HCT116 (cell line): ENCODE measurements at regions of chr9 and their contacts with region 1.

Region 1: DNA sequence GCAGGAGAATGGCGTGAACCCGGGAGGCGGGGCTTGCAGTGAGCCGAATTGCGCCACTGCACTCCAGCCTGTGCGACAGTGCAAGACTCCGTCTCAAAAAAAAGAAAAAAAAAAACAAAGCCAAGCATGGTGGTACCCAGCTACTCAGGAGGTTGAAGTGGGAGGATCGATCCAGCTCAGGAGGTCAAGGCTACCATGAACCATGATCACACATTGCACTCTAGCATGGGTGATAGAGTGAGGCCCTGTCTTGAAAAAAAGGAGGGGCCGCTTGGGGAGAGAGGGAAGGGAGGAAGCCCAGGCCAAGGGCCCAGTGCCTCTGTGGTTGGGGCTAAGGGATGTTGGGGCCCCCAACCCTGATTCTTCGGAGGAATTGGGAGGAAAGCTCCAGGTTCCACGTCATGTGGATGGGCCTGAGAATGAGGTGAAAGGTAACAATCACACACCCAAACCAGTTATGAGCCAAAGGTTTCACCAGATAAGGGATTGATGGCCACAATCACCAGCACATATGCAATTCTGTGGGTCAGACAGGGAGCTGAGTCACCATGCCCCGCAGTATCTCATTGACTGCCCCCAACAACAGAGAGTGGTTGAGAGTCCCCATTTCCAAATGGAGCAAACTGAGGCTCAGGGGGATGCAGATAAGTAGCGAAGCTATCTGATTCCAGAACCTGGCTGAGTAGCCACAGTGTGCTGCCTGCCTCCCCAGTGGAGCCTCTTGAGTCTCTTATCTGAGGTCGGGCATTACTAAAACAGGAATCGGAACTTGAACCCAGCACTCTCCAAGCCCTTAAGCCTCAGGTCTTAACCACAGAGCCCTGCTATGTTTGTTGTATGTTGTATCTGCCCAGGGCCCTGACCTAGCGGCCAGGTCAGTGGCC is 20.5 kb downstream of the SWI5 start:
- DNase-seq: no peak
- ATAC-seq: no peak
- H3K4me3 ChIP-seq: no peak overlapping the region
- H3K27ac ChIP-seq: no peak overlapping the region
- H3K4me1 ChIP-seq: peaks cover 5 to 29% of the 10 kb centered on the region in 2 experiments; a peak in 3 of 4 replicates
- H3K27me3 ChIP-seq: no peaks in the 10 kb centered on the region
- CTCF ChIP-seq: no peak
- POLR2A ChIP-seq: no peak
- RAD21 ChIP-seq: no peak

Region 2: GRCh38 chr9:128127990-128128835 is 168.4 kb before region 1 on chr9:
- CTCF ChIA-PET with region 1: no interaction called
- POLR2A ChIA-PET with region 1: no interaction called
- RAD21 ChIA-PET with region 1: no interaction called
- intact Hi-C with region 1: no loop called
- DNase-seq: peak; percentile 90
- ATAC-seq: peak; percentile 78
- H3K4me3 ChIP-seq: peak overlapping the region; percentile 90 to 92
- H3K27ac ChIP-seq: peak overlapping the region; percentile 99
- H3K4me1 ChIP-seq: peaks cover 9 to 31% of the 10 kb centered on the region in 2 experiments
- H3K27me3 ChIP-seq: no peaks in the 10 kb centered on the region
- CTCF ChIP-seq: no peak
- POLR2A ChIP-seq: no peak
- RAD21 ChIP-seq: no peak

Region 3: DNA sequence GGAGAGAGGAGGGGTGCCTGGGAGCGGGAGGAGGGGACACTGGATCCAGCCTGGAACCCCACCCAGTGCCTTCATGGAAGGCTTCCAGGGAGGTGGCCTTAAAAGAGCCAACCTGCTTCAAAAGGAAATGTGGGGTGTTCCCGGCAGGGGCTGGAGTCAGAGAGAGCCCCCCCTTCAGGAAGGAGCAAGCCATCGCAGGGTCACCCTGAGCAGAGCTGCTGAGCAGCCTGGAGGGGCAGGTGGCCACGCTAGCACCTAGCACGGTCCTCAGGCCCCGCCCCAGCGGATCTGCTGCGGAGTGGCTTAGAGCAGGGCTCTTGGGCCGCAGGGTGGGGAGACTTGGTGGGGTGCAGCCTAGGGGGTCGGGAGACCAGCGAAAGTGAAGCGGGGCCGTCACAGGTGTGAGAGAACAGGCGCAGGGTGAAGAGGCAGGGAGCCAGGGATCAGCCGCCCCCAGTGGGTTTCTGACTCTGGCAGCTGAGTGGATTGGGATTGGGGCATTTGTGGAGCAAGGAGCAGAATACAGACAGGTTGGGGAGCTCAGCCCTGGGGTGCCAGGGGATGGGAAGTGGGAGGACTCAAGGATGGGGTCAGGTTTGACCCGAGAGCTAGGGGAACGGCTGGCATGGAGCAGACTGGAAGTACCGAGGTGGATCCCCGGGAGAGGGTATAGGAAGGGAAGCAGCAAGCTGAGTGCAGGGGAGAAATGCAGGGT is 145.8 kb before region 1 on chr9:
- CTCF ChIA-PET with region 1: no interaction called
- POLR2A ChIA-PET with region 1: no interaction called
- RAD21 ChIA-PET with region 1: no interaction called
- intact Hi-C with region 1: no loop called
- DNase-seq: peak; percentile 10
- ATAC-seq: peak; percentile 89
- H3K4me3 ChIP-seq: no peak overlapping the region
- H3K27ac ChIP-seq: no peak overlapping the region
- H3K4me1 ChIP-seq: peaks cover 10 to 29% of the 10 kb centered on the region in 2 experiments
- H3K27me3 ChIP-seq: no peaks in the 10 kb centered on the region
- CTCF ChIP-seq: peak in 2 of 3 experiments; percentile 66 to 70; a peak in 4 of 6 replicates
- POLR2A ChIP-seq: no peak
- RAD21 ChIP-seq: no peak

Region 4: GRCh38 chr9:128361986-128362646 is 65.5 kb after region 1 on chr9:
- CTCF ChIA-PET with region 1: interaction called, 26 read pairs
- POLR2A ChIA-PET with region 1: no interaction called
- RAD21 ChIA-PET with region 1: interaction called in 1 of 2 experiments, 4 read pairs
- intact Hi-C with region 1: loop called (anchors 1 kb)
- DNase-seq: peak; percentile 59
- ATAC-seq: peak; percentile 92
- H3K4me3 ChIP-seq: peak overlapping the region; percentile 25 to 33
- H3K27ac ChIP-seq: peak overlapping the region; percentile 29
- H3K4me1 ChIP-seq: peaks cover 7 to 28% of the 10 kb centered on the region in 2 experiments; a peak in 3 of 4 replicates
- H3K27me3 ChIP-seq: no peaks in the 10 kb centered on the region
- CTCF ChIP-seq: peak in 2 of 3 experiments; percentile 85 to 88; a peak in 4 of 6 replicates
- POLR2A ChIP-seq: no peak
- RAD21 ChIP-seq: no peak

Region 5: DNA sequence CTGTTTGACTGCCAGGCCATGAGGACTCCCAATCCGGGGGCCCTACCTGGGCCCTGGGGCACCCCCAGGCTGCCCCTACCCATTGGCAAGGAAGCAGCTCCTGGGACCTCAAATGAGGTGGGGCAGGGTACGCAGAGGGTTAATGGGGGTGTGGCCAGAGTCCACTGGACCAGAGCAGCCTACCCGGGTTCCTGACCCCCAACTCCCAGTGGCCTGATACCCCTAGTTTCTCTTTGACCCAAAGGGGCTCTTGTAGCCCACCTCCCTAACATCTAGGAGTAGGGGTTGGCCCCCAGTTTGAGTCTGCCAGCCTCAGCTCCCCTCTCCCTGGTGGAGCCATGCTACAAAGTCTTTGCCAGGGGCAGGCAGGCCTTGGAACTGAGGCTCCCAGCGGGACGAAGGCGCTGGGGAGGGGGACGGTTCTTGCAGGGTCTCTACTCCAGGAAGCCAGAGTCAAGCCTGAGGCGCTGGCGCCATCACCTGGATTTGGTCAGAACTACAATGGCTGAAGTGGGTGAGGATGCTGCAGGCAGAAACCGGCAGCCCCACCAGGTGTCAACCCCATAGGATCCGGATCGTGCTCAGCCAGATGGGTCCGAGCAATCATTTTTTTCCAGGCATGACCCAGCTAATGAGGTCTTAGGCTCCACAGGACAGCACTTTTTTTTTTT is 115.7 kb after region 1 on chr9:
- CTCF ChIA-PET with region 1: interaction called, 11 read pairs
- POLR2A ChIA-PET with region 1: no interaction called
- RAD21 ChIA-PET with region 1: interaction called in 1 of 2 experiments, 6 read pairs
- intact Hi-C with region 1: loop called (anchors 1 kb)
- DNase-seq: no peak
- ATAC-seq: peak; percentile 65
- H3K4me3 ChIP-seq: no peak overlapping the region
- H3K27ac ChIP-seq: no peak overlapping the region
- H3K4me1 ChIP-seq: peaks cover 4 to 14% of the 10 kb centered on the region in 2 experiments; a peak in 3 of 4 replicates
- H3K27me3 ChIP-seq: no peaks in the 10 kb centered on the region
- CTCF ChIP-seq: peak; percentile 67 to 81 (median 79)
- POLR2A ChIP-seq: no peak
- RAD21 ChIP-seq: peak; percentile 90

Region 6: GRCh38 chr9:128552153-128552743 is 255.7 kb after region 1 on chr9 and contains the start of gene SPTAN1:
- CTCF ChIA-PET with region 1: no interaction called
- POLR2A ChIA-PET with region 1: no interaction called
- RAD21 ChIA-PET with region 1: no interaction called
- intact Hi-C with region 1: loop called (anchors 10 kb)
- DNase-seq: peak; percentile 62
- ATAC-seq: peak; percentile 88
- H3K4me3 ChIP-seq: peak within 1 kb of the TSS; percentile 60 to 93
- H3K27ac ChIP-seq: peak within 1 kb of the TSS; percentile 82
- H3K4me1 ChIP-seq: peaks cover 35 to 49% of the 10 kb centered on the region in 2 experiments
- H3K27me3 ChIP-seq: no peaks in the 10 kb centered on the region
- CTCF ChIP-seq: no peak
- POLR2A ChIP-seq: peak; percentile 99
- RAD21 ChIP-seq: no peak
- total RNA-seq, gene SPTAN1: 111 TPM